T-cell (primary cell): ENCODE measurements at regions of chr13 and their contacts with region 1.

Region 1: DNA sequence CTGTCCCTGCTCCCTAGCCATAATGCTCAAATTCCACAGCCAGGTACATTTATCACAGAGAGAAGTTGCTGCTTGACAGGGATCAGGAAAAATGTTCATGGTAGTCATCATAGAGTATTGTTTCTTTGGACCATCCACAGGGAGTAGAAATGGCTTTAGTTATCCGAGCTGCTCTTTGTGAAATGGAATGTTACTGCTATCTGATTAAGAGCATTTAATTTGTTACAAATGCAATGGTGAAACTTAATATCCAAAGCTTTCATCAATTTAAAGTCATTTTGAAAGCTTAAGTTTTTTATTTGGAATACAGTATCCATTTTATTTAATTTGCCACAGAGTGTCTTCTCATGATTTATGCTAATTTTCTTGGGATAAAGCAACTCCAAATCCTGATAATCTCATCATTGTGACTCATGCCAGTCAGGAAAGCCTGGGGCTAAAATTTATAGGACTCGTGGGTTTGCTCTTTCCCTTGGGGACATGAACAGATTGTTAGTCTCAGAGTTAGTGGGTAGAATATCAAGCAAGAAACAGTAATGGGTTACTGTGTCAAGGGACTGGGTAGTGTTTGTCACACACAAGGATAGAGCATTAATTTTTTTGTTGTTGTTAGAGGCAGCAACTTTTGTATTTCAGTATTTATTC is 59.8 kb downstream of the SCEL start:
- DNase-seq: no peak
- ATAC-seq: no peak
- H3K4me3 ChIP-seq: no peak overlapping the region
- H3K4me3 Mint-ChIP-seq: no peak overlapping the region
- H3K27ac ChIP-seq: no peak overlapping the region
- H3K27ac Mint-ChIP-seq: no peak overlapping the region
- H3K4me1 ChIP-seq: no peaks in the 10 kb centered on the region
- H3K4me1 Mint-ChIP-seq: no peaks in the 10 kb centered on the region
- H3K27me3 ChIP-seq: peaks cover 0 to 5% of the 10 kb centered on the region in 2 experiments
- H3K27me3 Mint-ChIP-seq: peaks cover 18 to 21% of the 10 kb centered on the region in 2 donors

Region 2: DNA sequence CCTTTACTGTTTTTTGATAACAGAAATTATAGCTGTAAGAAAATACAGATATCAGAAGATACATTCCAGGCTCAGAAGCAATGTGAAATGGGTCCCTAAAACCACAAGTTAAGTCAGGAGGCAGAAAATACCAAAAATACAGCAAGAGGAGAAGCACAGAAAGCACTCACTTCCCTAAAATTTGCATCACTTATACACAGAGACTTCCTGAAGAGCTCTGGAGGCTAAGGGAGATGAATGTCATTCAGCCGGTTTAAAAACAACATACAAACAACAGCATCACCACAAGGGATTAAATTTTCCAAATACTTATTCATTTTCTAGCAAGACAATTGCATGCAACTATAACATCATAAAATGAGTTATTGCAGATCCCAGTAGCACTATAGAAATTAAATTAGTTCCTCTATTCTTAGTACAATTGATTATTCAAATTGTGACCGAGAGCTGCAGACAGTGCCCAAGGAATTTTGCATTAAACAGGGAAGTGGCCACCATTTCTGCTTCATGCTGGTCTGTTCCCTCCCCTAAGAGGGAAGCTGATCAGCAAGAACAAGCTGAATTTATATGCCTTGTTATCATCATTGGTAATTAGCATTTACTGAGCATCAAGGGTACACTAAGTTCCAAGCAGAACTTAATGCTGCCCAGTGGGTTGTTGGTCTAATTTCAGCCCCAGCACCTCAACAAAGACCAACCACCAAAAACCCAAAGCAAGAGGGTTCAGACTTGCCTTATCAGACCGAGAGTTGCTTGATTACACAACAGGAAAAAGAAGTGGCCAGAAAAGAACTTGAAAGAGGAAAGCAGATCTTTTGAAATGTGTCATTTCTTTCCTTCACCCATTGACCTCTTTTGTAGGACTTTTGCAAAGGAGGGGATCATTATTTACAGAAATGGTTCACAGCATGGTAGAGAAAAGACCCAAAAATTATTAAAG is 849.8 kb before region 1 on chr13:
- CTCF ChIA-PET with region 1: no interaction called
- POLR2A ChIA-PET with region 1: no interaction called
- DNase-seq: no peak
- ATAC-seq: no peak
- H3K4me3 ChIP-seq: no peak overlapping the region
- H3K4me3 Mint-ChIP-seq: no peak overlapping the region
- H3K27ac ChIP-seq: no peak overlapping the region
- H3K27ac Mint-ChIP-seq: no peak overlapping the region
- H3K4me1 ChIP-seq: no peaks in the 10 kb centered on the region
- H3K4me1 Mint-ChIP-seq: no peaks in the 10 kb centered on the region
- H3K27me3 ChIP-seq: peaks cover 0 to 2% of the 10 kb centered on the region in 2 experiments
- H3K27me3 Mint-ChIP-seq: peaks cover 5 to 8% of the 10 kb centered on the region in 2 donors

Region 3: GRCh38 chr13:77729502-77730221 is 134.4 kb after region 1 on chr13:
- CTCF ChIA-PET with region 1: no interaction called
- POLR2A ChIA-PET with region 1: no interaction called
- DNase-seq: peak in 1 of 35 experiments; percentile 16
- ATAC-seq: peak; percentile 36 to 57 (median 46)
- H3K4me3 ChIP-seq: no peak overlapping the region
- H3K4me3 Mint-ChIP-seq: peak overlapping the region; percentile 25 to 62 (median 56)
- H3K27ac ChIP-seq: no peak overlapping the region
- H3K27ac Mint-ChIP-seq: peak overlapping the region; percentile 30 to 34
- H3K4me1 ChIP-seq: peaks cover 0 to 6% of the 10 kb centered on the region in 2 experiments
- H3K4me1 Mint-ChIP-seq: peaks cover 39 to 44% (median 40%) of the 10 kb centered on the region in 3 donors
- H3K27me3 ChIP-seq: no peaks in the 10 kb centered on the region
- H3K27me3 Mint-ChIP-seq: no peaks in the 10 kb centered on the region

Region 4: GRCh38 chr13:77751513-77752456 is 156.5 kb after region 1 on chr13:
- CTCF ChIA-PET with region 1: interaction called, 21 to 30 read pairs
- POLR2A ChIA-PET with region 1: no interaction called
- DNase-seq: peak in 28 of 35 experiments; percentile 4 to 77 (median 32)
- ATAC-seq: peak; percentile 68 to 80 (median 74)
- H3K4me3 ChIP-seq: no peak overlapping the region
- H3K4me3 Mint-ChIP-seq: no peak overlapping the region
- H3K27ac ChIP-seq: no peak overlapping the region
- H3K27ac Mint-ChIP-seq: peak overlapping the region; percentile 4 to 36
- H3K4me1 ChIP-seq: peaks cover 0 to 4% of the 10 kb centered on the region in 2 experiments
- H3K4me1 Mint-ChIP-seq: peaks cover 17 to 22% (median 17%) of the 10 kb centered on the region in 3 donors
- H3K27me3 ChIP-seq: no peaks in the 10 kb centered on the region
- H3K27me3 Mint-ChIP-seq: no peaks in the 10 kb centered on the region